ENCODE measurements at regions of chr12 and their contacts with region 1.

Region 1: DNA sequence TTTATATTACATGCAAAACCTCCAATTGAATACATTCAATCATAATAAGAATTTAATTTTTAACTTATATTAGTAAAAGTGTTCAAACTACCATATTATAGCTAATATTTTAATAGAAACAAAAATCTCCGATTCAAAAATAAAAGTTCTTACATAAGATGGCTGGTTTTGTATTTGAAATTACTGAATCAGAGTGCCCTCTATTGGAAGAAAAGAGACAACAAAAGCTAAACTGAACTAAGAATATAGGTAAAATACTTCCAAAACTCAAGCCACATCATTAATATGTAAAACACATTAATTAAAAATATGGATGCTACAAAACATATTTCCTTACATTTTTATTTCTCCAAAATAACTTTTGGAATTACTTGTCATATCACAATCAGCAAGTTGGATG is 120.3 kb downstream of the GARIN6 start:
- DNase-seq: peak; percentile 35
- H3K4me3 Mint-ChIP-seq: no peak overlapping the region
- H3K27ac Mint-ChIP-seq: no peak overlapping the region
- H3K4me1 Mint-ChIP-seq: no peaks in the 10 kb centered on the region
- H3K27me3 Mint-ChIP-seq: no peaks in the 10 kb centered on the region
- CTCF ChIP-seq: peak; percentile 52

Region 2: GRCh38 chr12:99783421-99783820 is 15.6 kb after region 1 on chr12:
- CTCF ChIA-PET with region 1: interaction called, 13 read pairs
- POLR2A ChIA-PET with region 1: no interaction called
- intact Hi-C with region 1: no loop called
- DNase-seq: no peak
- H3K4me3 Mint-ChIP-seq: no peak overlapping the region
- H3K27ac Mint-ChIP-seq: no peak overlapping the region
- H3K4me1 Mint-ChIP-seq: no peaks in the 10 kb centered on the region
- H3K27me3 Mint-ChIP-seq: no peaks in the 10 kb centered on the region
- CTCF ChIP-seq: no peak

Region 3: DNA sequence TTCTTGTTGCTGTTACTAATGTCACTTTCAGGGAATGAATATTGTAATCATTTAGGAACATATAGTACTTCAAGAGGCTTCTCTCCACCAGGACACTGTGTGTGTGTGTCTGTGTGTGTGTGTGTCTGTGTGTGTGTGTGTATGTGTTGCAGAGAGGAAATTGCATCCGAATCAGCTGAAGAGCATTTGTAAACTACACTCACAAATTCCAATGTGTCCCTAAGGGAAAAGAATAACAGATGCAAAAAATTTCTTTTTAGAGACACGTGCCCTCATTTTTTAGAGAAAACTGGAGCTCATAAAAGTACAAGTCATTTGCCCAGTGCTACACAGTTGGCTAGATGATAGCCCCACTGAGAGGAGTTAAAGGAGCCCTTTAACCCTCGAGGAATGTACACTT is 1195.6 kb after region 1 on chr12:
- CTCF ChIA-PET with region 1: no interaction called
- POLR2A ChIA-PET with region 1: no interaction called
- intact Hi-C with region 1: no loop called
- DNase-seq: no peak
- H3K4me3 Mint-ChIP-seq: no peak overlapping the region
- H3K27ac Mint-ChIP-seq: no peak overlapping the region
- H3K4me1 Mint-ChIP-seq: peaks cover 8% of the 10 kb centered on the region
- H3K27me3 Mint-ChIP-seq: no peaks in the 10 kb centered on the region
- CTCF ChIP-seq: no peak